Activated CD4-positive, alpha-beta T cell treated with anti-CD3 and anti-CD28 coated beads for 36 hours (primary cell): ENCODE measurements at regions of chr19 and their contacts with region 1.

Region 1: DNA sequence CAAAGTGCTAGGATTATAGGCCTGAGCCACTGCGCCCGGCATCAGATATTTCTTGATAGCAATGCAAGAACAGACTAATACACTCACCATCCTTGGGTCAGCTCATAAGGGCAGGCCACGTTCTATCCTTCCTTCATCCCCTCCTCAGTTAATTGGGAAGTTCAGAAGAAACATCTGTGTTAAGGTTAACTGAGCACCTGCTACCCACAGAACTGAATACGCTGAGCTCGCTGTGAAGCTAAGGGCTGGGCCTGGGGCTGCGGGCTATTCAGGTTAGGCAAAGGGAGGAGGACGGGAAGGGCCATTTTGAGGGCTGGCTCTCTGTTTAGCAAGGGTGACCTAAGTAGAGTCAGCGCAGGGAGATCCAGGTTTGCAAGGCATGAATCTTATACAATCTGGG is 43.0 kb upstream of the UQCRFS1 start:
- DNase-seq: no peak
- ATAC-seq: no peak
- H3K4me3 Mint-ChIP-seq: no peak overlapping the region
- H3K27ac Mint-ChIP-seq: no peak overlapping the region
- H3K4me1 Mint-ChIP-seq: no peaks in the 10 kb centered on the region
- H3K27me3 Mint-ChIP-seq: peaks cover 12% of the 10 kb centered on the region

Region 2: GRCh38 chr19:29145756-29146155 is 110.2 kb before region 1 on chr19:
- CTCF ChIA-PET with region 1: no interaction called
- POLR2A ChIA-PET with region 1: no interaction called
- intact Hi-C with region 1: no loop called
- DNase-seq: no peak
- ATAC-seq: no peak
- H3K4me3 Mint-ChIP-seq: no peak overlapping the region
- H3K27ac Mint-ChIP-seq: no peak overlapping the region
- H3K4me1 Mint-ChIP-seq: no peaks in the 10 kb centered on the region
- H3K27me3 Mint-ChIP-seq: peaks cover 2% of the 10 kb centered on the region

Region 3: DNA sequence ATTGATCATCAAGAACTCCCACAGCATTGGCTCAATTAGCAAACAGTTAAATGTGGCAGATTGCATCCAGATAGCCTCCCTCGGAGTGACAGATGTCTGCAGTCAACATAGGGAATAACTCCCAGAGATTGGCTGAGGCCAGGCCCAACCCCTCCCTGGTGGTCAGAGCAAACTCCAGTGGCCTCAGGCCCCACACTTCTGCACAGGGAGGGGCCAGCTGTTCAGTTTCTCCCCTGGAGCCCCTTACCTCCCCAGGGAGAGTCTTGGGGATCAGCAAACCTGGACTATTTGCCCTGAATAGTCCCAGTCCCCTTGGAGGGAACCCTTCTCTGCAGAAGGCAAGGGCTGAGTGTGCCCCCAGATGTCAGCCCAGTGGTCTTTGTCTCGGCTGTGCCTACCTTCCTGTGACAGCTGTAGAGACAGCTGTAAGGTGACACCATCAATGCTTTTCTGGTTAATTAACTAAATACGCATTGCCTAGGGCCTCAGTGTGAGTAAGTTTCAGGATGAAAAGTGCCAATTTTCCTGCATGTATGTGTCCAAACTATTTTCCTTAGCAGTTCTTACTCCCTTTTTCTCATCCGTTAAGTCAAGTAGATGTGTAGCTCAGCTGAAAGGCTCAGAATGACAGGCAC is 59.8 kb after region 1 on chr19:
- CTCF ChIA-PET with region 1: no interaction called
- POLR2A ChIA-PET with region 1: no interaction called
- intact Hi-C with region 1: no loop called
- DNase-seq: no peak
- ATAC-seq: no peak
- H3K4me3 Mint-ChIP-seq: no peak overlapping the region
- H3K27ac Mint-ChIP-seq: no peak overlapping the region
- H3K4me1 Mint-ChIP-seq: no peaks in the 10 kb centered on the region
- H3K27me3 Mint-ChIP-seq: peaks cover 16% of the 10 kb centered on the region

Region 4: GRCh38 chr19:29521291-29522075 is 265.6 kb after region 1 on chr19:
- CTCF ChIA-PET with region 1: no interaction called
- POLR2A ChIA-PET with region 1: no interaction called
- intact Hi-C with region 1: loop called in 1 of 2 experiments (anchors 2 kb)
- DNase-seq: no peak
- ATAC-seq: no peak
- H3K4me3 Mint-ChIP-seq: no peak overlapping the region
- H3K27ac Mint-ChIP-seq: no peak overlapping the region
- H3K4me1 Mint-ChIP-seq: peaks cover 5% of the 10 kb centered on the region
- H3K27me3 Mint-ChIP-seq: peaks cover 33% of the 10 kb centered on the region

Region 5: GRCh38 chr19:29694669-29695627 is 439.0 kb after region 1 on chr19:
- CTCF ChIA-PET with region 1: no interaction called
- POLR2A ChIA-PET with region 1: no interaction called
- intact Hi-C with region 1: no loop called
- DNase-seq: peak; percentile 92
- ATAC-seq: peak; percentile 97
- H3K4me3 Mint-ChIP-seq: no peak overlapping the region
- H3K27ac Mint-ChIP-seq: peak overlapping the region; percentile 53
- H3K4me1 Mint-ChIP-seq: peaks cover 12% of the 10 kb centered on the region
- H3K27me3 Mint-ChIP-seq: no peaks in the 10 kb centered on the region